Activated CD4-positive, alpha-beta T cell treated with anti-CD3 and anti-CD28 coated beads for 36 hours (primary cell): ENCODE measurements at regions of chr19 and their contacts with region 1.

Region 1: DNA sequence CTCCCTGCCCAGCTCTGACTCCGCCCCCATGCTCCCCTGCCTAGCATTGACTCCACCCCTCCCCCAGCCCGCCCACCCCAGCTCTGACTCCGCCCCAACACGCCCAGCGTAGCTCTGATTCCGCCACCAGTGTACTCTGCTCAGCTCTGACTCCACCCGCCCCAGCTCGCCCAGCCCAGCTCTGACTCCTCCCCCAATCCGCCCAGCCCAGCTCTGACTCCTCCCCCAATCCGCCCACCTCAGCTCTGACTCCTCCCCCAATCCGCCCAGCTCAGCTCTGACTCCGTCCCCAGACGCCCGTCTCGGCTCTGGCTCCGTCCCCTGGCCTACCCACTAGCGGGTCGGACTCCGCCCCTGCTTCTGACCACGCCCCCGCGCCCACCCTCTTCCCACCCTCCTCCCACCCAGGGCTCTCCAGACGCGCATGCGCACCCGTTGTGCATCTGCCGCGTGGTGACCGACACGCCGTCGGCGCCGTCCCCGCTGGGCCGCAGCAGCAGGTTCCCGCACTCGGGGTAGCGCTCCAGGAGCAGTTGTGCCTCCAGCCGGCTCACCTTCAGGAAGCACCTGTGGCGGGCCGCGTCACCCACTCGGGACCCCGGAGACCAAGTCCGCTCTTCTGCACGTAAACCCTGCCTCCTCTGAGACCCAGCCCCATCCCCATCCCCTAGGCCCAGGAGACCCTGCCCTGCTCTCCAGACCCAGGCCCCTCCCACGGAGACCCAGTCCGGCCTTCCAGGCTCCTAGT is 10.2 kb downstream of the STAP2 start:
- DNase-seq: peak; percentile 100
- ATAC-seq: peak; percentile 85
- H3K4me3 Mint-ChIP-seq: peak overlapping the region; percentile 93
- H3K27ac Mint-ChIP-seq: peak overlapping the region; percentile 94
- H3K4me1 Mint-ChIP-seq: peaks cover 27% of the 10 kb centered on the region
- H3K27me3 Mint-ChIP-seq: no peaks in the 10 kb centered on the region

Region 2: GRCh38 chr19:3572132-3572854 is 756.1 kb before region 1 on chr19:
- CTCF ChIA-PET with region 1: no interaction called
- POLR2A ChIA-PET with region 1: no interaction called
- intact Hi-C with region 1: loop called in 1 of 2 experiments (anchors 1 kb)
- DNase-seq: peak; percentile 100
- ATAC-seq: peak; percentile 96
- H3K4me3 Mint-ChIP-seq: peak overlapping the region; percentile 73
- H3K27ac Mint-ChIP-seq: no peak overlapping the region
- H3K4me1 Mint-ChIP-seq: peaks cover 11% of the 10 kb centered on the region
- H3K27me3 Mint-ChIP-seq: no peaks in the 10 kb centered on the region

Region 3: DNA sequence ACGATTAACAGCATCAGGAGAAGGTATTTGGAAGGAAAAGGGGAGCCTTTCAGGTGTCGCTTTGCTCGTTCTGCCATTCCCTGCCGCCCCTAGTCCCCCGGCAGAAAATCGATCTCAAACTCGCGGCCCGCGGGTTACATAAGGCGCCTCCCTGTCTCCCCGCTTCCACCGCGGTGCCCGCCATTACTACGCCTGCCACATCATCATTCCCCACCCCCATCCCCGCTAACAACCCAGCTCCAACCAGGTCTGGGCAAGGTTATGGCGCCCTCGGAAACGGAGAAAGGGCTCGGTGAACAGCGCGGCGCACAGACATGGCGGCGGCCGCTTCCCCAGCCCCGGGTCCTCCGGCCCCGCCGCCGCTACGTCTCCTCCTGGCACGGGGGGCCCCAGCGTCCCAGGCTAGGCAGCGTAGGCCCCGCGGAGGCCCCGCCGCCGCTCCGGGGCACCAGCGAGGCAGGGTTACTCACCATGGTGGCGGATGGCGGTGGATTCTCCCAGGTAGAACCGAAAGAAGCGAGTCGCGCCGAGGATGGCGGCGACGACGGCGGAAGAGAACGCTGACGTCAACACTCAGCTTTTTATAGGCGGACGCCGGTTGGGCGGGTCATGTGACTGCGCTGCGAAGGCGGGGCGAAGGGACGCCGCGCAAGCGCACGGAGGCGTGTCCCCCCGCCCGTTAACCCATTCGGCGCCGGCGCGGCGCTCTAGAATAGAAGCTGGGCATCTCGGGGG is 343.3 kb before region 1 on chr19 and contains the start of gene EEF2:
- CTCF ChIA-PET with region 1: no interaction called
- POLR2A ChIA-PET with region 1: no interaction called
- intact Hi-C with region 1: loop called in 1 of 2 experiments (anchors 5 kb)
- DNase-seq: peak; percentile 94
- ATAC-seq: peak; percentile 45
- H3K4me3 Mint-ChIP-seq: peak within 1 kb of the TSS; percentile 87
- H3K27ac Mint-ChIP-seq: peak within 1 kb of the TSS; percentile 94
- H3K4me1 Mint-ChIP-seq: peaks cover 52% of the 10 kb centered on the region
- H3K27me3 Mint-ChIP-seq: no peaks in the 10 kb centered on the region
- total RNA-seq, gene EEF2: 3,116 to 3,255 TPM

Region 4: GRCh38 chr19:4182084-4182810 is 146.2 kb before region 1 on chr19 and contains the starts of genes ANKRD24 and SIRT6:
- CTCF ChIA-PET with region 1: no interaction called
- POLR2A ChIA-PET with region 1: no interaction called
- intact Hi-C with region 1: loop called in 1 of 2 experiments (anchors 5 kb)
- DNase-seq: peak; percentile 98
- ATAC-seq: peak; percentile 84
- H3K4me3 Mint-ChIP-seq: peak within 1 kb of the TSS; percentile 92
- H3K27ac Mint-ChIP-seq: peak within 1 kb of the TSS; percentile 93
- H3K4me1 Mint-ChIP-seq: peaks cover 30% of the 10 kb centered on the region
- H3K27me3 Mint-ChIP-seq: no peaks in the 10 kb centered on the region
- total RNA-seq, gene ANKRD24: 1.1 to 1.3 TPM
- total RNA-seq, gene SIRT6: 26.2 to 29.4 TPM

Region 5: DNA sequence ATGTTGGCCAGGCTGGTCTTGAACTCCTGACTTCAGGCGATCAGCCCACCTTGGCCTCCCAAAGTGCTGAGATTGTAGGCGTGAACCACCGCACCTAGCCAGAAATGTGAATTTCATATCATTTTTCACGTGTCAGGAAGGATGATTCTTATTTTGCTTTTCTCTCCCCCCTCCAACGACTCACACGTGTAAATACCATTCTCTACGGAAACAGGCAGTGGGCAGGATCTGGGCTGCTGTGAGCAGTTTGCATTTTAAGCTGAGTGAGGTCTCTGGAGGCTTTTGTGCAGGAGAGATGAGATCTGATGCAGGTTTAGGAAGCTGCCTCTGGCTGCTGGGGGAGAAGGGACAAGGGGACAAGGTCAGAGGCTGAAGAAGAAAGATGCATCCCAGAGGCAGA is 134.1 kb before region 1 on chr19:
- CTCF ChIA-PET with region 1: no interaction called
- POLR2A ChIA-PET with region 1: no interaction called
- intact Hi-C with region 1: no loop called
- DNase-seq: no peak
- ATAC-seq: no peak
- H3K4me3 Mint-ChIP-seq: no peak overlapping the region
- H3K27ac Mint-ChIP-seq: no peak overlapping the region
- H3K4me1 Mint-ChIP-seq: peaks cover 8% of the 10 kb centered on the region
- H3K27me3 Mint-ChIP-seq: peaks cover 38% of the 10 kb centered on the region

Region 6: GRCh38 chr19:4304530-4305252 is 23.7 kb before region 1 on chr19 and contains the start of gene FSD1:
- CTCF ChIA-PET with region 1: no interaction called
- POLR2A ChIA-PET with region 1: interaction called, 6 read pairs
- intact Hi-C with region 1: loop called in 1 of 2 experiments (anchors 1 kb)
- DNase-seq: peak; percentile 90
- ATAC-seq: peak; percentile 82
- H3K4me3 Mint-ChIP-seq: peak within 1 kb of the TSS; percentile 66
- H3K27ac Mint-ChIP-seq: peak within 1 kb of the TSS; percentile 72
- H3K4me1 Mint-ChIP-seq: peaks cover 34% of the 10 kb centered on the region
- H3K27me3 Mint-ChIP-seq: no peaks in the 10 kb centered on the region
- total RNA-seq, gene FSD1: 23.1 to 25.3 TPM

Region 7: GRCh38 chr19:4457654-4458395 is 129.4 kb after region 1 on chr19 and contains the start of gene UBXN6:
- CTCF ChIA-PET with region 1: no interaction called
- POLR2A ChIA-PET with region 1: interaction called, 3 read pairs
- intact Hi-C with region 1: loop called in 1 of 2 experiments (anchors 1 kb)
- DNase-seq: peak; percentile 99
- ATAC-seq: peak; percentile 93
- H3K4me3 Mint-ChIP-seq: peak within 1 kb of the TSS; percentile 86
- H3K27ac Mint-ChIP-seq: peak within 1 kb of the TSS; percentile 86
- H3K4me1 Mint-ChIP-seq: peaks cover 19% of the 10 kb centered on the region
- H3K27me3 Mint-ChIP-seq: no peaks in the 10 kb centered on the region
- total RNA-seq, gene UBXN6: 32.9 to 38.4 TPM